CD4-positive, alpha-beta memory T cell (primary cell): ENCODE measurements at regions of chr1 and their contacts with region 1.

Region 1: GRCh38 chr1:172745014-172745413 is 86.1 kb downstream of the FASLG start:
- DNase-seq: peak; percentile 46 to 62 (median 59)
- H3K4me3 ChIP-seq: no peak overlapping the region
- H3K4me3 Mint-ChIP-seq: peak overlapping the region in 5 of 8 donors; percentile 46 to 81 (median 64)
- H3K27ac ChIP-seq: no peak overlapping the region
- H3K27ac Mint-ChIP-seq: peak overlapping the region in 6 of 7 donors; percentile 1 to 57 (median 22)
- H3K4me1 ChIP-seq: peaks cover 32% of the 10 kb centered on the region
- H3K4me1 Mint-ChIP-seq: peaks cover 29 to 38% (median 33%) of the 10 kb centered on the region in 4 donors
- H3K27me3 ChIP-seq: no peaks in the 10 kb centered on the region
- H3K27me3 Mint-ChIP-seq: peaks cover 0 to 3% of the 10 kb centered on the region in 2 donors

Region 2: DNA sequence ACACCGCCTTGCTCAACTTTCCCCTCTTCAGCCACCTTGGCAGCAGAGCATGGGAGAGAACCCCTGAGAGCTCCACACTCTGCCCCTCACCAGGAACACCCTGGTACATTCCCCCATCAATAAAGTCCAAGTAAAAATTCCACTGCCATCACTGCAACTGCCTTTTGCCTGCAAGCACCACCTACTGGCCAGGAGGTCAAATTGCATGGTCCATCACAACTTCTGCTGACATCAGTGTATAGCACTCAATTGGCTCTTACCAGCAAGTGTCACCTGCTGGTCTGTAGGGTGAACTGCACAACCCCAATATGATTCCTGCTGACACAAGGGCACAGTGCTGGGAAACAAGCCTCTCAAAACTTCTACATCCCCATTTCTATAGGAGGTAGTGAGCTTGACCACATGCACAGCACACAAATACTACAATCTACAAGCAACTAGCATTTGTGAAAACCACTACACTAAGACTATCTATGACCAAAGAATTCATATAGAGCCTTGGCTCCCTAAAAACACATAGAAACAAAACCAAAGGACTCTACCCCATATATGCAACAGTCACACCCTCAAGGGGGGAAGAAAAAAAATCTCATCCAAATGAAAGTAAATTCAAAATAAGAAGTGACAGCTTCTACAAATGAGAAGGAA is 16.9 kb before region 1 on chr1:
- CTCF ChIA-PET with region 1: interaction called, 14 read pairs
- POLR2A ChIA-PET with region 1: no interaction called
- intact Hi-C with region 1: no loop called
- DNase-seq: peak; percentile 48 to 65 (median 58)
- H3K4me3 ChIP-seq: no peak overlapping the region
- H3K4me3 Mint-ChIP-seq: peak overlapping the region in 1 of 8 donors; percentile 5
- H3K27ac ChIP-seq: no peak overlapping the region
- H3K27ac Mint-ChIP-seq: peak overlapping the region in 1 of 7 donors; percentile 28
- H3K4me1 ChIP-seq: peaks cover 14% of the 10 kb centered on the region
- H3K4me1 Mint-ChIP-seq: peaks cover 11 to 26% (median 21%) of the 10 kb centered on the region in 4 donors
- H3K27me3 ChIP-seq: no peaks in the 10 kb centered on the region
- H3K27me3 Mint-ChIP-seq: no peaks in the 10 kb centered on the region

Region 3: GRCh38 chr1:172826096-172826743 is 81.2 kb after region 1 on chr1:
- CTCF ChIA-PET with region 1: interaction called, 16 read pairs
- POLR2A ChIA-PET with region 1: no interaction called
- intact Hi-C with region 1: loop called (anchors 2 kb)
- DNase-seq: peak in 1 of 5 donors; percentile 15
- H3K4me3 ChIP-seq: no peak overlapping the region
- H3K4me3 Mint-ChIP-seq: no peak overlapping the region
- H3K27ac ChIP-seq: no peak overlapping the region
- H3K27ac Mint-ChIP-seq: no peak overlapping the region
- H3K4me1 ChIP-seq: peaks cover 24% of the 10 kb centered on the region
- H3K4me1 Mint-ChIP-seq: no peaks in the 10 kb centered on the region
- H3K27me3 ChIP-seq: no peaks in the 10 kb centered on the region
- H3K27me3 Mint-ChIP-seq: no peaks in the 10 kb centered on the region

Region 4: DNA sequence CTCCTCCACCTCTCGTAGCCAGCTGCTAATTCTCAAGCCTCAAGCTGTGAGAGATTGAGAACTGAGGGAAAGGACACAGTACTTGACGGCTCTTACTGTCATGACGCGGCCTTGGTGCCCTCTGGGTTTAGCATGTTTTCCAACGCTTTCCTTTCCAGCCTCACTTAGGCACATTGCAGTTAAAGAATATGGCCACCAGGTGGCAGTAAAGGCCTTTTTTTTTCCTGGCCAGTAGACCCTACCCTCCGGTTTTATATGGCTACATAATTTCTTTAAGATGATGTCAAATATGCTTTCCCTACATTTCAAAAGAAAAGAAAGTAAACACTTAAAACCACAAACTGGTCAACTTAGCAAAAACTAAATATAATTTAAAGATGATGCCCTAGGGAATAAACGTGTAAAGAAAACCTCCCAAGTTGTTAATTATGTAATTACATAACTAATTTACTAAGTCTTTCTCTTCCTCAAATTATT is 675.4 kb after region 1 on chr1:
- CTCF ChIA-PET with region 1: interaction called, 54 read pairs
- POLR2A ChIA-PET with region 1: no interaction called
- intact Hi-C with region 1: loop called (anchors 1 kb)
- DNase-seq: peak; percentile 64 to 72 (median 65)
- H3K4me3 ChIP-seq: no peak overlapping the region
- H3K4me3 Mint-ChIP-seq: peak overlapping the region in 1 of 8 donors; percentile 61
- H3K27ac ChIP-seq: no peak overlapping the region
- H3K27ac Mint-ChIP-seq: peak overlapping the region in 4 of 7 donors; percentile 2 to 77 (median 42)
- H3K4me1 ChIP-seq: peaks cover 7% of the 10 kb centered on the region
- H3K4me1 Mint-ChIP-seq: peaks cover 3 to 7% (median 6%) of the 10 kb centered on the region in 4 donors
- H3K27me3 ChIP-seq: no peaks in the 10 kb centered on the region
- H3K27me3 Mint-ChIP-seq: no peaks in the 10 kb centered on the region

Region 5: GRCh38 chr1:173824331-173825081 is 1079.5 kb after region 1 on chr1 and contains the starts of genes CENPL and DARS2:
- CTCF ChIA-PET with region 1: interaction called, 67 read pairs
- POLR2A ChIA-PET with region 1: interaction called, 7 read pairs
- intact Hi-C with region 1: loop called (anchors 1 kb)
- DNase-seq: peak; percentile 92 to 96 (median 93)
- H3K4me3 ChIP-seq: peak within 1 kb of the TSS; percentile 93 to 95
- H3K4me3 Mint-ChIP-seq: peak within 1 kb of the TSS; percentile 93 to 99 (median 97)
- H3K27ac ChIP-seq: peak within 1 kb of the TSS; percentile 79
- H3K27ac Mint-ChIP-seq: peak within 1 kb of the TSS; percentile 97 to 99 (median 97)
- H3K4me1 ChIP-seq: peaks cover 18% of the 10 kb centered on the region
- H3K4me1 Mint-ChIP-seq: peaks cover 27 to 46% (median 33%) of the 10 kb centered on the region in 4 donors
- H3K27me3 ChIP-seq: no peaks in the 10 kb centered on the region
- H3K27me3 Mint-ChIP-seq: no peaks in the 10 kb centered on the region
- total RNA-seq, gene CENPL: 9.0 to 10.2 TPM
- total RNA-seq, gene DARS2: 13.4 to 13.5 TPM

Region 6: GRCh38 chr1:174217787-174218574 is 1473.0 kb after region 1 on chr1:
- CTCF ChIA-PET with region 1: no interaction called
- POLR2A ChIA-PET with region 1: no interaction called
- intact Hi-C with region 1: loop called (anchors 2 kb)
- DNase-seq: peak in 4 of 5 donors; percentile 37 to 45 (median 40)
- H3K4me3 ChIP-seq: no peak overlapping the region
- H3K4me3 Mint-ChIP-seq: no peak overlapping the region
- H3K27ac ChIP-seq: no peak overlapping the region
- H3K27ac Mint-ChIP-seq: no peak overlapping the region
- H3K4me1 ChIP-seq: no peaks in the 10 kb centered on the region
- H3K4me1 Mint-ChIP-seq: peaks cover 0 to 5% (median 2%) of the 10 kb centered on the region in 4 donors
- H3K27me3 ChIP-seq: no peaks in the 10 kb centered on the region
- H3K27me3 Mint-ChIP-seq: no peaks in the 10 kb centered on the region